CD8-positive, alpha-beta T cell (primary cell): ENCODE measurements at regions of chr7 and their contacts with region 1.

Region 1: GRCh38 chr7:23474094-23474828 is 4.0 kb upstream of the IGF2BP3 start:
- DNase-seq: peak in 6 of 9 experiments; percentile 21 to 59 (median 41)
- ATAC-seq: no peak
- H3K4me3 ChIP-seq: no peak overlapping the region
- H3K4me3 Mint-ChIP-seq: no peak overlapping the region
- H3K27ac ChIP-seq: no peak overlapping the region
- H3K27ac Mint-ChIP-seq: no peak overlapping the region
- H3K4me1 ChIP-seq: peaks cover 30% of the 10 kb centered on the region
- H3K4me1 Mint-ChIP-seq: peaks cover 27% of the 10 kb centered on the region
- H3K27me3 ChIP-seq: peaks cover 72 to 84% of the 10 kb centered on the region in 2 experiments
- H3K27me3 Mint-ChIP-seq: peaks cover 65% of the 10 kb centered on the region
- CTCF ChIP-seq: no peak

Region 2: GRCh38 chr7:23373151-23374004 is 100.9 kb before region 1 on chr7:
- CTCF ChIA-PET with region 1: no interaction called
- POLR2A ChIA-PET with region 1: no interaction called
- intact Hi-C with region 1: loop called in 1 of 2 experiments (anchors 5 kb)
- DNase-seq: peak in 7 of 9 experiments; percentile 3 to 80 (median 35)
- ATAC-seq: peak; percentile 93
- H3K4me3 ChIP-seq: no peak overlapping the region
- H3K4me3 Mint-ChIP-seq: no peak overlapping the region
- H3K27ac ChIP-seq: no peak overlapping the region
- H3K27ac Mint-ChIP-seq: no peak overlapping the region
- H3K4me1 ChIP-seq: peaks cover 12% of the 10 kb centered on the region
- H3K4me1 Mint-ChIP-seq: peaks cover 17% of the 10 kb centered on the region
- H3K27me3 ChIP-seq: peaks cover 0 to 2% of the 10 kb centered on the region in 2 experiments
- H3K27me3 Mint-ChIP-seq: peaks cover 16% of the 10 kb centered on the region
- CTCF ChIP-seq: no peak

Region 3: DNA sequence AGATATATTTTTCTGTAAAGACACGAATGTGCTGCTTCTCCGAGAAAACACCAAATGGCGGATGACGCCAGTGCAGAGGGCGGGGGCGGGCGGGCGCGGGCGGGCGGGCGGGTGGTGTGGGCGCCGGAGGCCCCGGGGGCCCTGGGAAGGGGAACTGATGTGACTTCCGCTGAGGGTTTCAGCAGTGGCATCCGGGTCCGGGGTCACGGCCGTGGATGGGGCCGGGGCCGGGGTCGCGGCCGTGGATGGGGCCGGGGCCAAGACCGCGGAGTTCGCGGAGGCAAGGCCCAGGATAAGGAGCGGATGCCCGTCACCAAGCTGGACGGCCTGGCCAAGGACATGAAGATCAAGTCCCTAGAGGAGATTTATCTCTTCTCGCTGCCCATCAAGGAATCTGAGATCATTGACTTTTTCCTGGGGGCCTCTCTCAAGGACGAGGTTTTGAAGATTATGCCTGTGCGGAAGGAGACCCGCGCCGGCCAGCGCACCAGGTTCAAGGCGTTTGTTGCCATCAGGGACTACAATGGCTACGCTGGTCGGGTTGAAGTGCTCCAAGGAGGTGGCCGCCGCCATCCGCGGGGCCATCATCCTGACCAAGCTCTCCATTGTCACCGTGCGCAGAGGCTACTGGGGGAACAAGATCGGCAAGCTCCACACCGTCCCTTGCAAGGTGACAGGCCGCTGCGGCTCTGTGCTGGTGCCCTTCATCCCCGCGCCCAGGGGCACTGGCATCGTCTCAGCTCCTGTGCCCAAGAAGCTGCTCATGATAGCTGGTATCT is 16.3 kb after region 1 on chr7:
- CTCF ChIA-PET with region 1: interaction called, 3 read pairs
- POLR2A ChIA-PET with region 1: interaction called, 5 read pairs
- intact Hi-C with region 1: loop called in 1 of 2 experiments (anchors 2 kb)
- DNase-seq: peak; percentile 32 to 81 (median 62)
- ATAC-seq: peak; percentile 93
- H3K4me3 ChIP-seq: peak overlapping the region; percentile 66 to 67
- H3K4me3 Mint-ChIP-seq: peak overlapping the region; percentile 80
- H3K27ac ChIP-seq: peak overlapping the region; percentile 35 to 70
- H3K27ac Mint-ChIP-seq: peak overlapping the region; percentile 82
- H3K4me1 ChIP-seq: peaks cover 12% of the 10 kb centered on the region
- H3K4me1 Mint-ChIP-seq: peaks cover 3% of the 10 kb centered on the region
- H3K27me3 ChIP-seq: no peaks in the 10 kb centered on the region
- H3K27me3 Mint-ChIP-seq: no peaks in the 10 kb centered on the region
- CTCF ChIP-seq: no peak

Region 4: GRCh38 chr7:23679898-23680413 is 205.7 kb after region 1 on chr7 and contains the start of gene FAM221A:
- CTCF ChIA-PET with region 1: no interaction called
- POLR2A ChIA-PET with region 1: no interaction called
- intact Hi-C with region 1: loop called in 1 of 2 experiments (anchors 10 kb)
- DNase-seq: peak; percentile 55 to 90 (median 80)
- ATAC-seq: peak; percentile 97
- H3K4me3 ChIP-seq: peak within 1 kb of the TSS; percentile 49 to 71
- H3K4me3 Mint-ChIP-seq: peak within 1 kb of the TSS; percentile 96
- H3K27ac ChIP-seq: peak within 1 kb of the TSS; percentile 3 to 18
- H3K27ac Mint-ChIP-seq: peak within 1 kb of the TSS; percentile 79
- H3K4me1 ChIP-seq: peaks cover 3% of the 10 kb centered on the region
- H3K4me1 Mint-ChIP-seq: peaks cover 18% of the 10 kb centered on the region
- H3K27me3 ChIP-seq: no peaks in the 10 kb centered on the region
- H3K27me3 Mint-ChIP-seq: no peaks in the 10 kb centered on the region
- CTCF ChIP-seq: peak; percentile 73
- total RNA-seq, gene FAM221A: 2.4 to 3.0 TPM